Mammary epithelial cell (primary cell): ENCODE measurements at regions of chr12 and their contacts with region 1.

Region 1: DNA sequence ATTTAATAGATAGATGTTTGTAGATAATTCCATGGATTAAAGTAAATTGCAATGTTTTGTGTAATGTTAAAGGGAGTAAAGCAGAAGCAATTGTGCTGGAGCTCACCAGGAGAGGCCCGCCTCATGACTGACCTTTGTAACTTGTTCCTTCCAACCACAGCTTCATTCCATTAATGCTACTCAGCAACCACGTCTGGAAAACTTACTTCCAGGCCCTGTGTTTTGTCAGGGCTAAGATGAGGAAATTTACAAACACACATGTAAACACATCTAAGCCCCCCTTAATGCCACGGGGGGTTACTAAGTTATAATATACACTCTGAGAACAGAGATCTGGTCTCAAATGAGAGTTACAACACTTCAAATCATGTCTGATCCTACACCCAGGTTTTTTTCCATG is 12.4 kb downstream of the LUM start:
- DNase-seq: peak; percentile 76
- H3K4me3 ChIP-seq: no peak overlapping the region
- H3K27ac ChIP-seq: no peak overlapping the region
- H3K4me1 ChIP-seq: peaks cover 10% of the 10 kb centered on the region
- H3K27me3 ChIP-seq: no peaks in the 10 kb centered on the region
- CTCF ChIP-seq: no peak

Region 2: GRCh38 chr12:90757957-90758356 is 341.0 kb before region 1 on chr12:
- CTCF ChIA-PET with region 1: no interaction called
- dilution Hi-C with region 1: no loop called
- in situ Hi-C with region 1: no loop called
- intact Hi-C with region 1: no loop called
- DNase-seq: no peak
- H3K4me3 ChIP-seq: no peak overlapping the region
- H3K27ac ChIP-seq: no peak overlapping the region
- H3K4me1 ChIP-seq: no peaks in the 10 kb centered on the region
- H3K27me3 ChIP-seq: no peaks in the 10 kb centered on the region
- CTCF ChIP-seq: no peak

Region 3: DNA sequence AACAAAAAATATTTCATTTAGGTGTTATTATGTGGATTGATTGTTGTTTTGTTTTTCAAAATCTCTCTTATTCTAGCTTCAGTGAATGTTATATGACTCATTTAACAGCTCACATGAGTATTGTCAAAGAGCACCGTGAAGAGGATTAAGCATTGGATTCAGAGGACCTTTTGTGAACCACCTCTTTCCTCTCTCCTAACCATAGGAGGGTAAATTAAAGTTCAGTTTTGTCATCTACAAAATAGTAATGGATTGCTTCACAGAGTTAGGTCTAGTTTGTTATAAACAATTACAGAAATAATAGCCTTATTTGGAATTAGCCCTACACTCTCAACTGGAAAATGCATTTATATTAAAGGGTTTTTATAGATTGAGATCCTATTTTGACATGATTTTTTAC is 40.2 kb before region 1 on chr12:
- CTCF ChIA-PET with region 1: no interaction called
- dilution Hi-C with region 1: no loop called
- in situ Hi-C with region 1: no loop called
- intact Hi-C with region 1: loop called (anchors 5 kb)
- DNase-seq: no peak
- H3K4me3 ChIP-seq: no peak overlapping the region
- H3K27ac ChIP-seq: no peak overlapping the region
- H3K4me1 ChIP-seq: no peaks in the 10 kb centered on the region
- H3K27me3 ChIP-seq: peaks cover 7% of the 10 kb centered on the region
- CTCF ChIP-seq: no peak